HEK293 (cell line): ENCODE measurements at regions of chr17 and their contacts with region 1.

Region 1: DNA sequence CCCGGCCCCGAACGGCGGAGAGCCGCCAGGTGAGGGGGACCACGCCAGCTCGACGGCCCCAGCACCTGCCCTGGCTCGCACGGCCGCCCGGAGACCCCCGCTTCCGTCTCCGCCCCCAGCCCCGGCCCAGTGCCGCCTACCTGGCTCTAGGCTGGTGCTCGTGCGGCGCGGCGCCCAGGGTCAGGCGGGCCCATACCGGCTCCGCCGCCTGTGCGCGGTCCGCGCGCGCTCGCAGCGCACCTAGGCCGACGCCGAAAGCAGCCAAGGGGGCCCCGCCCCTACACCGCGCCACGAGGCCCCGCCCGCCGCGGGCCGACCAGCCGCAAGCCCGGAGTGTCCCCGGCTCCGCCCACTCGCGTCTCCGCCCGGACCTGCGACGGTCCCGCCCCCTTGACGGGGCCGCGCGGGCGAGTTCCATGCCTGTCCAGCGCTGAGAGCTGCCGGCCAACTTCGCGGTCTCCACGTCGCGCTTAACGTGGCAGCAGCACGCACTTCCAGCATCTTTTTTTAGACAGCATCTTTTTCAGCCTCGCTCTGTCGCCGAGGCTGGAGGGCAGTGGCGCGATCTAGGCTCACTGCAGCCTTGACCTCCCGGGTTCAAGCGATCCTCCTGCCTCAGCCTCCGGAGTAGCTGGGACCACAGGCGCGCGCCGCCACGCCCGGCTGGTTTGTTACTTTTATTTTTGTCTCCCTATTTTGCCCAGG is at the start of gene SLC25A39:
- H3K4me3 ChIP-seq: peak within 1 kb of the TSS; percentile 88
- H3K27ac ChIP-seq: peak within 1 kb of the TSS; percentile 56; the same call in 1 of the 2 replicates
- H3K4me1 ChIP-seq: 0 out of 2 replicates have a peak, but pooled peaks cover 3% of the 10 kb centered on the region
- CTCF ChIP-seq: no peak

Region 2: GRCh38 chr17:44006598-44007345 is 318.0 kb before region 1 on chr17:
- CTCF ChIA-PET with region 1: no interaction called
- POLR2A ChIA-PET with region 1: no interaction called
- H3K4me3 ChIP-seq: peak overlapping the region; percentile 72
- H3K27ac ChIP-seq: peak overlapping the region; percentile 71
- H3K4me1 ChIP-seq: peaks cover 9% of the 10 kb centered on the region
- CTCF ChIP-seq: peak; percentile 61

Region 3: GRCh38 chr17:44038604-44039011 is 286.1 kb before region 1 on chr17:
- CTCF ChIA-PET with region 1: no interaction called
- POLR2A ChIA-PET with region 1: no interaction called
- H3K4me3 ChIP-seq: no peak overlapping the region
- H3K27ac ChIP-seq: no peak overlapping the region
- H3K4me1 ChIP-seq: peaks cover 7% of the 10 kb centered on the region
- CTCF ChIP-seq: no peak

Region 4: GRCh38 chr17:44186307-44187130 is 138.2 kb before region 1 on chr17 and contains the start of gene TMUB2:
- CTCF ChIA-PET with region 1: no interaction called
- POLR2A ChIA-PET with region 1: interaction called, 10 read pairs
- H3K4me3 ChIP-seq: peak within 1 kb of the TSS; percentile 77
- H3K27ac ChIP-seq: peak within 1 kb of the TSS; percentile 91
- H3K4me1 ChIP-seq: peaks cover 3% of the 10 kb centered on the region
- CTCF ChIP-seq: no peak

Region 5: DNA sequence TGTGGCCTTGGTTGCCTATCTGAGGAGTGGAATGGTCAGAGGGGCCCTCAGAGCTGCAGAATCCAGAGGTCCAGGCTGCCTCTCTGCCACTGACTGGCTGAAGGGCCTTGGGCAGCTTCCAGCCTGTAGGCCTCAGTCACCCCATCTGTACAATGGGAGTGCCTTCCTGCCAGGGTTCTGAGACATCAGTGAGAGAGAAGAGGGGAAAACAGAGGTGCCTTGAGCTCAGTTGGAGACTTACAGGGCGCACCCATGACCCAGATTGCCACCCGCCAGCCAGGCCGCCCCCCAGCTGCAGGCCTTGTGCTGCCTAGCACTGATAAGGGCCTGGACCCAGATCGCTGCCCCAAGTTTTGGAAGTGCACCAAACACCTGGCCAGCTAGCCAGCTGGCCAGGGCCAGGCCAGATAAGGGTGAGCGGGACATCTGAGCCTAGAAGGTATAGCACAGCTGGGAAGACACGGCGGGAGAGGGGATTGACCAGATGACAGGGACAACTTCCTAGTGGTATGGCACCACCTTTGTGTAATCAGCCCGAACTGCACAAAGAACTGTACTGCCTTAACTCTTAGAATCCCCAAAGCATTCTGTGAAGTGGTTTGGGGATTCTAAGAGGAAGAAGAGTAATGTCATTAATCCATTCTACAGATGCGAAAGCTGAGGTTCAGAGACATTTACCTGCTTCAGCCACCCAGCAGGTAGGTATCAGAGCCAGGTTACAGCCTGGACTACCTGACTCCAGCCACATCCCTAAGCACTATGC is 58.1 kb before region 1 on chr17:
- CTCF ChIA-PET with region 1: no interaction called
- POLR2A ChIA-PET with region 1: no interaction called
- H3K4me3 ChIP-seq: no peak overlapping the region
- H3K27ac ChIP-seq: no peak overlapping the region
- H3K4me1 ChIP-seq: no peaks in the 10 kb centered on the region
- CTCF ChIP-seq: no peak